Activated CD4-positive, alpha-beta T cell treated with anti-CD3 and anti-CD28 coated beads for 36 hours (primary cell): ENCODE measurements at regions of chr6 and their contacts with region 1.

Region 1: DNA sequence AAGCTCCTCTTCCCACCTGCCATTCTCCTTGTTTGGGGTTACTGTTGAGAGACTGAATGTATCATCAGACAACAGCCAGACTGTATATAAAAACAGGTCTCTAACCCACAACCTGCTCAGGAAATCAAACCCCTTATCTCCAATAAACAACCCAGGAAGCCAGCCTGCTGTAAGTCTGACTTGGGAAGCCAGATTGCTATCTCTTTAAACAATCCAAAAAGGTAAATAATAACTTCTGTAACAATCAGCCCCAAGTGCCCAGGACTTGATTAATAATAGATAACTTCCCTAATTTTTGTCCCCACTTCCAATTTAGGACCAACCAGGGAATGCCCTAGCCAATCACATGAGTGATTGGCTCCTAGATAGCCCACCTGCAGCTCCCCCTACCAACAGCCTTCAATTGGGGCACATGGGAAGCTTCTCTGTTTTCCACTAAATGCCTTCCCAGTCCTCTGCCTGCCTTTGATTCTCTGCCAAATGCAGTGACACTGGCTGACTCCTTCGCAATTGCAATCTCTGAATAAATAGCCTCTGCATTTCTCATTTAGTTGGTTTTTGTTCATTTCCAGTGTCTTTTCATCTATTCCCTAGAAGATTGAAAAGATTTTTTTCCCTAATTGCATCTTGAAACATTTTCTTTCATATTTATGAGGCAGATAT is 117.1 kb upstream of the TAB2 start:
- DNase-seq: no peak
- ATAC-seq: no peak
- H3K4me3 Mint-ChIP-seq: no peak overlapping the region
- H3K27ac Mint-ChIP-seq: no peak overlapping the region
- H3K4me1 Mint-ChIP-seq: peaks cover 2% of the 10 kb centered on the region
- H3K27me3 Mint-ChIP-seq: no peaks in the 10 kb centered on the region

Region 2: DNA sequence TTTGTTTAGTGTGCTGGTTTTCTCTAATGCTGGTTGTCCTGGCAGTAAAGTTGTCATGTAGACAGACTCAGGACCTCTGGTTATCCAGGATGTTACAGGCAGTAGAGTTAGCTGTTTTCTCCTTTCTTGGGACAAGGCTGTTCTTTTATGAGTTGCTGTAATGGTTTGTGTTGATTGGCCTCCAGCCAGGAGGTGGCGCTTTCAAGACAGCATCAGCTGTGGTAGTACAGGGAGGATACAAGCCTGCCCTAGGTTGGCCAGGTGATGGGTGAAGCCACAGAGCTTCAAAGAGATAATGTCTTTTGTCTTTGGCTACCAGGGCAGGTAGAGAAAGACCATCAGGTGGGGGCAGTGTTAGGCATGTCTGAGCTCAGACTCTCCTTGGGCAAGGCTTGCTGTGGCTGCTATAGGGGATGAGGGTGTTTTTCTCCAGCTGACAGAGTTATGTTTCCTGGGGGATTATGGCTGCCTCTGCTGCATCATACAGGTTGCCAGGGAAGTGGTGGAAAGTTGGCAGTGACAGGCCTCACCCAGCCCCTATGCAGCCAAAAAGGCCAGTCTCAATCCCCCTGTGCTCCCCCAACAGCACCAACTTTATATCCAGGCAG is 10.1 kb before region 1 on chr6:
- CTCF ChIA-PET with region 1: interaction called, 11 read pairs
- POLR2A ChIA-PET with region 1: no interaction called
- intact Hi-C with region 1: no loop called
- DNase-seq: peak; percentile 84
- ATAC-seq: peak; percentile 94
- H3K4me3 Mint-ChIP-seq: no peak overlapping the region
- H3K27ac Mint-ChIP-seq: peak overlapping the region; percentile 1
- H3K4me1 Mint-ChIP-seq: peaks cover 18% of the 10 kb centered on the region
- H3K27me3 Mint-ChIP-seq: no peaks in the 10 kb centered on the region